GM18951 (cell line): ENCODE measurements at regions of chr20 and their contacts with region 1.

Region 1: DNA sequence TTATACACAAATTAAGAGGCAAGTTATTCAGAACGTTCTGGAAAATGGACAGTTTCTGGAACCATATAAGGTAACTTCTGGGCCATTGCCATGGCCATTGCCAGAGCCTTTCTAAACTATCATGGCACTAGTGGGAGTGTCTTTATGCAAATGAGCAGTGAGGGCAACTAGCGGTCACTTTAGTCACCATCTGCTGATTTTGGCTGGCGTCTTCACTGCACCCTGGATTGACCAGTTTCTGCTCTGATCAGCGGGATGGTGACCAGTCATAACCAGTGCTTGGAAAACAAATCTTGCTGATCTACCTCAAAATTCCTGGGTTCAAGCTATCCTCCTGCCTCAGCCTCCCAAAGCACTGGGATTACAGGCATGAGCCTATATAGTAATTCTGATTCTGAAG is 7.3 kb upstream of the SNTA1 start:
- POLR2A ChIP-seq: no peak

Region 2: GRCh38 chr20:33666293-33667244 is 215.7 kb after region 1 on chr20 and contains the start of gene ACTL10:
- in situ Hi-C with region 1: loop called (anchors 10 kb)
- POLR2A ChIP-seq: peak; percentile 90